Gastrocnemius medialis (tissue), 4 donors: ENCODE measurements at regions of chr18 and their contacts with region 1.

Region 1: GRCh38 chr18:24271381-24272331 is 126.0 kb downstream of the OSBPL1A start:
- DNase-seq: peak; percentile 64 to 77
- ATAC-seq: peak; percentile 76 to 81
- H3K4me3 ChIP-seq: peak overlapping the region; percentile 81 to 94 (median 86)
- H3K27ac ChIP-seq: peak overlapping the region; percentile 88 to 94 (median 91)
- H3K4me1 ChIP-seq: peaks cover 13 to 54% of the 10 kb centered on the region in 2 donors
- H3K27me3 ChIP-seq: no peaks in the 10 kb centered on the region
- CTCF ChIP-seq: peak in 2 of 5 experiments; percentile 41 to 49
- POLR2A ChIP-seq: peak; percentile 25 to 44

Region 2: GRCh38 chr18:24176727-24177416 is 94.8 kb before region 1 on chr18:
- in situ Hi-C with region 1: loop called in 1 of 4 experiments (anchors 10 kb)
- intact Hi-C with region 1: loop called (anchors 2 kb)
- DNase-seq: peak; percentile 40 to 53
- ATAC-seq: peak; percentile 77 to 78
- H3K4me3 ChIP-seq: no peak overlapping the region
- H3K27ac ChIP-seq: peak overlapping the region in 2 of 4 donors; percentile 1 to 22
- H3K4me1 ChIP-seq: peaks cover 6 to 7% of the 10 kb centered on the region in 2 donors
- H3K27me3 ChIP-seq: no peaks in the 10 kb centered on the region
- CTCF ChIP-seq: peak; percentile 71 to 85 (median 78)
- POLR2A ChIP-seq: no peak

Region 3: GRCh38 chr18:24198461-24198860 is 73.2 kb before region 1 on chr18:
- in situ Hi-C with region 1: no loop called
- intact Hi-C with region 1: loop called (anchors 2 kb)
- DNase-seq: peak; percentile 95 to 96
- ATAC-seq: peak; percentile 84 to 88
- H3K4me3 ChIP-seq: peak overlapping the region in 1 of 4 donors; percentile 7
- H3K27ac ChIP-seq: peak overlapping the region; percentile 80 to 97 (median 92)
- H3K4me1 ChIP-seq: peaks cover 73 to 83% of the 10 kb centered on the region in 2 donors
- H3K27me3 ChIP-seq: no peaks in the 10 kb centered on the region
- CTCF ChIP-seq: no peak
- POLR2A ChIP-seq: peak in 1 of 2 donors; percentile 20